Heart right ventricle (tissue), 16 donors: ENCODE measurements at regions of chr16 and their contacts with region 1.

Region 1: GRCh38 chr16:12228602-12229499 is 252.3 kb downstream of the SNX29 start:
- DNase-seq: peak; percentile 29 to 39
- ATAC-seq: peak; percentile 51 to 83 (median 75)
- H3K4me3 ChIP-seq: no peak overlapping the region
- H3K27ac ChIP-seq: no peak overlapping the region
- H3K4me1 ChIP-seq: peaks cover 0 to 9% (median 0%) of the 10 kb centered on the region in 9 donors
- H3K27me3 ChIP-seq: no peaks in the 10 kb centered on the region
- CTCF ChIP-seq: peak; percentile 40 to 74 (median 64)

Region 2: DNA sequence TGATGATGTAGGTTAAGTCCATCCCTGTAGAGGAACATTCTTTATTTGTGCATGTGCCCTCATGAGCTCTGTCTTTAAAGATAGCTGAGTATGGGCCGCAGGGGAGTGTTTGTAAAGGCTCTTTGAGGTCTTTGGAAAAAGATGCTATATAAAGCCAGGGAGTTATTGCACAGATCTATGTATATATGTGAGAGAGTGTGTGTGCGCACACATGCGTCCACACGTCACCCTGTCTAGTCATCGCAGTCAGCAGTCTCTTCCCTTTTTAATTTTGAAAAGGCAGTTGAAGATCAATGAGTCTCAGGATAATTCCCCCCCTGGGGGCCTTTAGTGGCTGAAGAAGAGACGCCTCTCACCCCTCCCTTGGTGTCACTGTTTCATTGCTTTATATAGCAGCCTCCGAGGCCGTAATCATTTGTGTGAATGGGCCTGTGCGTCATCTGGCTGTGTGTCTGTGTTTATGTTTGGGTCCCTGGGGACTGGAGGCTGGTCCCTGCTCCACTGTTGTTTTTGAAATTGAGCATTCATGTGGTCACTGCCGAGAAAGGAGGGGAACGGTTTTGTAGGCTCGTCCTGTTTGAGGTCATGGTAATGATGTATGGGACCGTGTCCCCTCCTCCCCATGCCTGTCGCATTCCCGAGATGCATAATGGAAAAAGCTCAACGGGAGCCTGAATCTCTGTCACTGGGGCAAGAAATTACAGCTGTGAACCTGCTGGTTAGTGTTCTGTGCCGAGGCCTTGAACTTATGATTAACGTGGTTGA is 108.5 kb before region 1 on chr16:
- intact Hi-C with region 1: loop called in 1 of 10 experiments (anchors 10 kb)
- DNase-seq: peak in 1 of 2 donors; percentile 76
- ATAC-seq: peak; percentile 80 to 94 (median 91)
- H3K4me3 ChIP-seq: no peak overlapping the region
- H3K27ac ChIP-seq: peak overlapping the region in 3 of 10 donors; percentile 10 to 42 (median 12)
- H3K4me1 ChIP-seq: peaks cover 5 to 25% (median 21%) of the 10 kb centered on the region in 9 donors
- H3K27me3 ChIP-seq: no peaks in the 10 kb centered on the region
- CTCF ChIP-seq: peak in 1 of 9 donors; percentile 6

Region 3: GRCh38 chr16:12330946-12331345 is 102.1 kb after region 1 on chr16:
- intact Hi-C with region 1: loop called in 1 of 10 experiments (anchors 10 kb)
- DNase-seq: peak; percentile 49 to 56
- ATAC-seq: peak; percentile 59 to 87 (median 74)
- H3K4me3 ChIP-seq: no peak overlapping the region
- H3K27ac ChIP-seq: peak overlapping the region in 8 of 10 donors; percentile 21 to 80 (median 46)
- H3K4me1 ChIP-seq: peaks cover 0 to 40% (median 26%) of the 10 kb centered on the region in 9 donors
- H3K27me3 ChIP-seq: no peaks in the 10 kb centered on the region
- CTCF ChIP-seq: no peak